ENCODE measurements at regions of chr3 and their contacts with region 1.

Region 1: GRCh38 chr3:25915673-25916072 is 125.8 kb downstream of the OXSM start:
- DNase-seq: no peak
- ATAC-seq: no peak
- H3K4me3 ChIP-seq: no peak overlapping the region
- H3K27ac ChIP-seq: no peak overlapping the region
- H3K4me1 ChIP-seq: no peaks in the 10 kb centered on the region
- H3K27me3 ChIP-seq: no peaks in the 10 kb centered on the region
- CTCF ChIP-seq: no peak
- EP300 ChIP-seq: no peak
- POLR2A ChIP-seq: no peak
- RAD21 ChIP-seq: no peak

Region 2: DNA sequence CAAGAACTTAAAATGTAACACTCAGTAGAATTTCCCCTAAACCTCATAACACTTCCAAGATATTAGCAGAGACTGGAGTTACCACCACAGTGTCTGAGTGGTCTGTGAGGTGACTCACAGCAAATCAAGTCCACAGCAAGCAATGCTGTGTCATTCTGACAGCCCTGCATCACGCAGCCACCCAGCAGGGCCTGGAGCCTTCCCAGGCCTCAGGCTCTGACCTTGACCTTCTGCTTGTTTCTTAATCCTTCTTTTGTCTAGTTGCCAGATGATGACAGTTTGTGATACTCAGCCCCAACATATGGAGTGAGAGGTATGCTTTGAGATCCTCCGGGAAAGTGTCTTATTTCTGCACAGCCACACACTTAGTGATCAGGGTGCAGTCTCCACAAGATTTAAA is 333.4 kb before region 1 on chr3:
- CTCF ChIA-PET with region 1: no interaction called
- POLR2A ChIA-PET with region 1: no interaction called
- RAD21 ChIA-PET with region 1: no interaction called
- SMC1A ChIA-PET with region 1: no interaction called
- in situ Hi-C with region 1: no loop called
- intact Hi-C with region 1: no loop called
- DNase-seq: no peak
- ATAC-seq: no peak
- H3K4me3 ChIP-seq: no peak overlapping the region
- H3K27ac ChIP-seq: no peak overlapping the region
- H3K4me1 ChIP-seq: no peaks in the 10 kb centered on the region
- H3K27me3 ChIP-seq: no peaks in the 10 kb centered on the region; a peak in 1 of 4 replicates
- CTCF ChIP-seq: no peak
- EP300 ChIP-seq: no peak
- POLR2A ChIP-seq: no peak
- RAD21 ChIP-seq: no peak

Region 3: GRCh38 chr3:25971736-25972135 is 56.1 kb after region 1 on chr3:
- CTCF ChIA-PET with region 1: no interaction called
- POLR2A ChIA-PET with region 1: no interaction called
- RAD21 ChIA-PET with region 1: no interaction called
- SMC1A ChIA-PET with region 1: no interaction called
- in situ Hi-C with region 1: no loop called
- intact Hi-C with region 1: loop called (anchors 2 kb)
- DNase-seq: no peak
- ATAC-seq: no peak
- H3K4me3 ChIP-seq: no peak overlapping the region
- H3K27ac ChIP-seq: no peak overlapping the region
- H3K4me1 ChIP-seq: no peaks in the 10 kb centered on the region
- H3K27me3 ChIP-seq: no peaks in the 10 kb centered on the region
- CTCF ChIP-seq: no peak
- EP300 ChIP-seq: no peak
- POLR2A ChIP-seq: no peak
- RAD21 ChIP-seq: no peak

Measured in GM12878 (cell line).